Activated CD4-positive, alpha-beta T cell treated with anti-CD3 and anti-CD28 coated beads for 36 hours (primary cell): ENCODE measurements at regions of chr1 and their contacts with region 1.

Region 1: GRCh38 chr1:202192770-202193613 is 607 bp upstream of the LGR6 start:
- DNase-seq: peak; percentile 75
- ATAC-seq: peak; percentile 33
- H3K4me3 Mint-ChIP-seq: no peak overlapping the region
- H3K27ac Mint-ChIP-seq: no peak overlapping the region
- H3K4me1 Mint-ChIP-seq: peaks cover 2% of the 10 kb centered on the region
- H3K27me3 Mint-ChIP-seq: peaks cover 20% of the 10 kb centered on the region

Region 2: DNA sequence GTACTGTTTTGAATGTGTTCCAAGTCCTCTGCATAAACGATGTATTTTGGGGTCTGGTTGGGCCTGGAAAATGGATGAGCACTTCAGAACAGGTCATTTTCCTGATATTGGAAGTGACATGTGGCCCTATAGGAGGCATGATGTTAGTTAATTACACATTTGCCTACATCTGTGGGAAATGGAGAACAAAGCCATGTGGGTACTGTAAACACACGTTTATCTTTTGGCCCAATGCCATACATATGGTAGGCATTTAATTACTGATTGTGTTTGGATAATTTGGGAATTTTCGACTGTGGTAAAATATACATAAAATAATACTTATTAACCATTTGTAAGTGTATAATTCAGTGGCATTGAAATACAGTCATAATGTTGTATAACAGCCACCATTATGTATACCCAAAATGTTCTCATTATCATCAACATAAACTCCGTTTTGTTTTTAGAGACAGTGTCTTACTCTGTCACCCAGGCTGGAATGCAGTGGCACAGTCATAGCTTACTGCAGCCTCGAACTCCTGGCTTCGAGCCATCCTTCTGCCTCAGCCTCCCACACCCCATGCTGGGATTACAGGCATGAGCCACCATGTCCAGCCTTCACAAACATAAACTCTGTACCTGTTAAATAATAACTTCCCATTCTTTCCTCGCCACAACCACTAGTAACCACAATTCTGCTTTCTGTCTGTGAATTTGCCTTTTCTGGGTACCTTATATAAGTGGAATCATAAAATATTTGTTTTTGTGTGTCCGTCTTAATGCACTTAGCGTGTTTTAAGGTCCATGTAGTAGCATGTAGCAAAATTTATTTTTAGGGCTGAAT is 222.4 kb before region 1 on chr1:
- CTCF ChIA-PET with region 1: no interaction called
- POLR2A ChIA-PET with region 1: no interaction called
- intact Hi-C with region 1: no loop called
- DNase-seq: no peak
- ATAC-seq: no peak
- H3K4me3 Mint-ChIP-seq: no peak overlapping the region
- H3K27ac Mint-ChIP-seq: no peak overlapping the region
- H3K4me1 Mint-ChIP-seq: no peaks in the 10 kb centered on the region
- H3K27me3 Mint-ChIP-seq: no peaks in the 10 kb centered on the region

Region 3: DNA sequence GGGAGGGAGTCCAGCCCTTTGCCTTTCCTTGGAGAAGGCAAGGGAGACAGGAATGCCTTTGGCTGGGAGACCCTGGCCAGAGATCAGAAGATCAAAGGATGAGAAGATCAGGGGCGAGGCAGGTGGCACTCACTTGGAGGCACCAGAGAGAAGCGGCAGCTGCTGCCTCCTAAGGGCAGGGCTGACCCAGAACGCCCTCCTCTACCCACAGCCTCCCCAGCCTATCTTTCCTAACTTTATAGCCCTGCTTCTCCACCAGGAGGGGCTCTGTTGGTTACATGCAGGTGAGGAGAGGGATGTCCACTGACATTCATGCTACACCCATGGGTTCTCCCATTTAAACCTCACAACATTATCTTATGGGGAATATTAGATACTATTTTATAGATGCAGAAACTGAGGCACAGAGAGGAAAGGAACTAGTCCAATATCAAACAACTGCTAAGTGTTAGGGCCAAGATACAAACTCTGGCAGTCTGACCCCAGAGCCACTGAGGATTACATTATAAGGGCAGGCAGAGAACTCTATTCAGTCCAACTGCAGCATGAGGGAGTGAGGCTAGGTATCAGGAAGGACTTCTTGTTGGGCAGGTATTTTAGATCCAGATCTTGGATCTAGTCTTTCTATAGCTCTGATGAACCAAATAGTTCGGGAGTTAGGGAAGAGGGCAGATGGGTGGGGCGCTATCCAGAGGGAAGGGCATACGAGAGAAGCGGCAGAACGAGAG is 20.5 kb after region 1 on chr1:
- CTCF ChIA-PET with region 1: interaction called, 18 read pairs
- POLR2A ChIA-PET with region 1: no interaction called
- intact Hi-C with region 1: no loop called
- DNase-seq: no peak
- ATAC-seq: peak; percentile 78
- H3K4me3 Mint-ChIP-seq: peak overlapping the region; percentile 28
- H3K27ac Mint-ChIP-seq: no peak overlapping the region
- H3K4me1 Mint-ChIP-seq: peaks cover 5% of the 10 kb centered on the region
- H3K27me3 Mint-ChIP-seq: peaks cover 49% of the 10 kb centered on the region